AG04449 (cell line): ENCODE measurements at regions of chr10 and their contacts with region 1.

Region 1: GRCh38 chr10:71270301-71271220 is 48.5 kb upstream of the SLC29A3 start:
- DNase-seq: no peak
- H3K4me3 ChIP-seq: no peak overlapping the region
- CTCF ChIP-seq: peak; percentile 73

Region 2: DNA sequence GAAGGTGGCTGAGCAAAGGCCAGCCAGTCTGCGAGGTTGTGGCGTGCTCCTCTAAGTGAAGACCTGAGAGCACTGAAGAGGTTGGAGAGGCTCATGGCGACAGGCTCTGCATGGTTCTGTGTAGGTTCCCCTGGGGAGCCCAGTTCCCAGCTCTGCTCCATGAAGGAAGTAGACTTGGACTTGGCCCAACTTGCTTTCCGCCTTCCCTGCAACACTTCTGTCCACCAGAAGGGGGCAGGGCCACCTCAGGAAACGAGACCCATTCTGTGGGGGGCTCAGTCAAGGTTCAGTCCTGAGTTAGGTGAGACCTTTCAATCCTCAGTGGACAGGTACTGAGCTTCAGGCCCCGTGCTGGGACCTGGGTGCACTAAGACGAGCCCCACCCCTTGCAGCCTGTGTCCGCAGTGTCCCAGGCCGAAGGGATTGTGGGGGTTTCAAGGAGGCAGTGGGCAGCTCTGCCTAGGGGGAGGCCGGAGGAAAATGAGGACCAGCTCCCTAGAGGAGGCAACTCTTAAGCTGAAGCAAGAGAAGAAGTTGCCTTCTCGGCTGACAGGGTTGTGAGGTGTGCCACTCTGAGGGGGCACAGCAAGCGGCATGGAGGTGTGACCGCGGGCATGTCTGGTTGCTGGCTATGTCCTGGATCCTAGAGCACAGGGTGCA is 367.2 kb before region 1 on chr10:
- CTCF ChIA-PET with region 1: interaction called, 13 read pairs
- POLR2A ChIA-PET with region 1: no interaction called
- DNase-seq: no peak
- H3K4me3 ChIP-seq: no peak overlapping the region
- CTCF ChIP-seq: peak; percentile 87

Region 3: DNA sequence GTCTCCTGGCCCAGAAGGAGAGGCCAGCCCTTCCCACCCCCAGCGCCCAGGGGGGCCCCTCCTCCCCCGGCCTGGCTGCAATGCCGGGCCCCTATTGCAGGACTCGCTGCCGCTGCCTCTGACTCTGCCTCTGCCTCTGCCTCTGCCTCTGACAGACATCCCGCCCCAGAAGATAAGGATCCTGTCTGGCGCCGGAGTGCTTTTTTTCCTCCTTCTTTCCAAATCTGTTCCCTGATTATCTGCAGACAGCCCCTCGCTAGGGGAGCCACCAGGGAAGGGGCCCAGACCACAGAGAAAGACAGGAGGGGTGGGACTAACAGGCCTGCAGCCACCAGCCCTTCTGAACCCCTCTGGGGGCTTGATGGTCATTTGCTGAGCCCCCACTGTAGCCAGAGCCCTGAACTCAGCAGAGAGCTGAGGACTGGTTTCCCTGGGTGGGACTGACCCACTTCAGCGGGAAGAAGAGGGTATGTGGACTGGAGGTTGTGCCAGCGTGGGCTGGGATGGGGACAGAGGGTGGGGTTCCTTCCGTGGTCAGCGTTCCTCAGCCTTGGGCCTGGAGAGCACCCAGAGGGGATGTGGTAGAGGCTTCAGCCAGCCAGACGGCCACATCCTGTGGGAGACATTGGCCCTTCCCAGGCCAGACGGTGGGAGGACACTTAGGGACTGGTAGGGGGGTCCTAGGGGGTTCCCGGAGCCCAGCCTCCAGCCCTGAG is 35.4 kb before region 1 on chr10:
- CTCF ChIA-PET with region 1: interaction called, 98 read pairs
- POLR2A ChIA-PET with region 1: no interaction called
- DNase-seq: no peak
- H3K4me3 ChIP-seq: peak overlapping the region; percentile 8; the same call in 1 of the 2 replicates
- CTCF ChIP-seq: no peak

Region 4: GRCh38 chr10:71255808-71256660 is 14.5 kb before region 1 on chr10:
- CTCF ChIA-PET with region 1: interaction called, 101 read pairs
- POLR2A ChIA-PET with region 1: no interaction called
- DNase-seq: no peak
- H3K4me3 ChIP-seq: no peak overlapping the region
- CTCF ChIP-seq: no peak

Region 5: GRCh38 chr10:71293446-71294084 is 23.0 kb after region 1 on chr10:
- CTCF ChIA-PET with region 1: interaction called, 15 read pairs
- POLR2A ChIA-PET with region 1: no interaction called
- DNase-seq: no peak
- H3K4me3 ChIP-seq: no peak overlapping the region
- CTCF ChIP-seq: no peak